ENCODE measurements at regions of chr3 and their contacts with region 1.

Region 1: GRCh38 chr3:66442254-66443117 is 58.3 kb downstream of the LRIG1 start:
- DNase-seq: peak; percentile 70
- ATAC-seq: peak; percentile 82
- H3K4me3 Mint-ChIP-seq: peak overlapping the region; percentile 74
- H3K27ac Mint-ChIP-seq: peak overlapping the region; percentile 100
- H3K4me1 Mint-ChIP-seq: peaks cover 93% of the 10 kb centered on the region
- H3K27me3 Mint-ChIP-seq: no peaks in the 10 kb centered on the region
- CTCF ChIP-seq: no peak

Region 2: GRCh38 chr3:66490214-66490613 is 47.7 kb after region 1 on chr3:
- CTCF ChIA-PET with region 1: interaction called, 6 read pairs
- POLR2A ChIA-PET with region 1: interaction called, 13 read pairs
- DNase-seq: no peak
- ATAC-seq: no peak
- H3K4me3 Mint-ChIP-seq: peak overlapping the region; percentile 28
- H3K27ac Mint-ChIP-seq: no peak overlapping the region
- H3K4me1 Mint-ChIP-seq: peaks cover 95% of the 10 kb centered on the region
- H3K27me3 Mint-ChIP-seq: no peaks in the 10 kb centered on the region
- CTCF ChIP-seq: no peak

Measured in WTC11 (cell line).